Activated CD4-positive, alpha-beta T cell treated with anti-CD3 and anti-CD28 coated beads, Interleukin-2, amount 10 ng/mL, durations not matched to agents 24 days and 14 days (primary cell): ENCODE measurements at regions of chr2 and their contacts with region 1.

Region 1: GRCh38 chr2:160493227-160494028 is at the start of gene RBMS1:
- DNase-seq: peak; percentile 87
- H3K4me3 Mint-ChIP-seq: peak within 1 kb of the TSS; percentile 94
- H3K27ac Mint-ChIP-seq: peak within 1 kb of the TSS; percentile 90
- H3K4me1 Mint-ChIP-seq: peaks cover 30% of the 10 kb centered on the region
- H3K27me3 Mint-ChIP-seq: peaks cover 11% of the 10 kb centered on the region
- total RNA-seq, gene RBMS1: 34.0 and 35.2 TPM in 2 replicates

Region 2: GRCh38 chr2:160087854-160088745 is 405.3 kb before region 1 on chr2:
- intact Hi-C with region 1: no loop called
- DNase-seq: no peak
- H3K4me3 Mint-ChIP-seq: no peak overlapping the region
- H3K27ac Mint-ChIP-seq: no peak overlapping the region
- H3K4me1 Mint-ChIP-seq: no peaks in the 10 kb centered on the region
- H3K27me3 Mint-ChIP-seq: no peaks in the 10 kb centered on the region

Region 3: DNA sequence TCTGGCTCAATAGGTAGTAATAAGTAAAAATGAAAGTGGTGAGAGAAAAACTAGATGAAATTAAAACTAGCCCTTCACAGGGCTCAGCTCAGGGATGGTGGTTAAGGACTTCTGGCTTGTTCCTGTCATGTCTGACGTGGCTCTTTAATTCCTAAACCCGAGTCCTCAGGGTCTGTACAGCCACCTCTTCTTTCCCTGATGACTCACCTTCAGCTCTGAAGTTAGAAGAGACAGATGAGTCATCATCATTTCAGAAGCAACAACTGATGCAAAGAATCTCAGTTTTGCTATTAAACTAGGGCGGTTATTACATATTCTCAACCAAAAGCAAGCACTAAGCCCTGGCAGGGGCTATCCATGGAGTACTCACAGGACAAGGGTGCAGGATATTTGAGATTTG is 269.4 kb before region 1 on chr2:
- intact Hi-C with region 1: loop called (anchors 5 kb)
- DNase-seq: peak; percentile 73
- H3K4me3 Mint-ChIP-seq: peak overlapping the region; percentile 31
- H3K27ac Mint-ChIP-seq: peak overlapping the region; percentile 67
- H3K4me1 Mint-ChIP-seq: peaks cover 44% of the 10 kb centered on the region
- H3K27me3 Mint-ChIP-seq: peaks cover 4% of the 10 kb centered on the region

Region 4: DNA sequence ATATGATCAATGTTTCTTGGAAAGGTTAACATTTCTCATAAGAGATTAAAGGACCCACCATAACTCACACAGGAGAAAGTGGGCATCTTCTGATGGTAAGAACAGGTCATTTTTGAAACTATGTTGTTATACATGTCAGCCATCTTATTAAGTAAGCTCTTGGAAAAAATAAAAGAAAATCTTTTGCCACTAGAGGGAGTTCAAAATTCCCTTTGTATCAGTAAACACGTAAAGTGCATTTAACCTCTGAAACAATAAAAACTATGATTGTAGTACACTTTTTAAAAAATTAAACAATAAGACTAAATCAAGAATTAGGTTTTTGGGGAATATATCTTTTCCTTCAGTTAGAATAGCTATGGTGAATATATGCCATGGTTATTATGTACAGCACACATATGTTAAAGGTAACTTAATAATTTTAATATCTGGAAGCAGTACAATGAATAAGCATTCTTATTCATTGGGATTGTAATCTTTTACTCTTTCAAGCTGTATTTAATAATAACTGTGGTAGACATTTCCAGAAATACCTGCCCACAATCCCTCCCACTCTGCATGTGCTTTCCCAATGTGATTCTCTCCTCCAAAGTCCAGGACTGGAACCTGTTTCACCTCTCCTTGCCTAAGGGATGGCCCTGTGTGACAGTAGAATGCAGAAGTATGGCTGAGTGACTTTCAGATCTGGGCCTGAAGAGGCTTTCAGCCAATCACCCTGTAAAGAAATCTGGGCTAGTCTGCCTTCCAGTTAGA is 64.0 kb before region 1 on chr2:
- intact Hi-C with region 1: loop called (anchors 1 kb)
- DNase-seq: no peak
- H3K4me3 Mint-ChIP-seq: no peak overlapping the region
- H3K27ac Mint-ChIP-seq: no peak overlapping the region
- H3K4me1 Mint-ChIP-seq: peaks cover 49% of the 10 kb centered on the region
- H3K27me3 Mint-ChIP-seq: no peaks in the 10 kb centered on the region

Region 5: GRCh38 chr2:160482673-160483072 is 10.8 kb before region 1 on chr2:
- intact Hi-C with region 1: loop called (anchors 1 kb)
- DNase-seq: peak; percentile 83
- H3K4me3 Mint-ChIP-seq: peak overlapping the region; percentile 61
- H3K27ac Mint-ChIP-seq: peak overlapping the region; percentile 81
- H3K4me1 Mint-ChIP-seq: peaks cover 57% of the 10 kb centered on the region
- H3K27me3 Mint-ChIP-seq: no peaks in the 10 kb centered on the region

Region 6: DNA sequence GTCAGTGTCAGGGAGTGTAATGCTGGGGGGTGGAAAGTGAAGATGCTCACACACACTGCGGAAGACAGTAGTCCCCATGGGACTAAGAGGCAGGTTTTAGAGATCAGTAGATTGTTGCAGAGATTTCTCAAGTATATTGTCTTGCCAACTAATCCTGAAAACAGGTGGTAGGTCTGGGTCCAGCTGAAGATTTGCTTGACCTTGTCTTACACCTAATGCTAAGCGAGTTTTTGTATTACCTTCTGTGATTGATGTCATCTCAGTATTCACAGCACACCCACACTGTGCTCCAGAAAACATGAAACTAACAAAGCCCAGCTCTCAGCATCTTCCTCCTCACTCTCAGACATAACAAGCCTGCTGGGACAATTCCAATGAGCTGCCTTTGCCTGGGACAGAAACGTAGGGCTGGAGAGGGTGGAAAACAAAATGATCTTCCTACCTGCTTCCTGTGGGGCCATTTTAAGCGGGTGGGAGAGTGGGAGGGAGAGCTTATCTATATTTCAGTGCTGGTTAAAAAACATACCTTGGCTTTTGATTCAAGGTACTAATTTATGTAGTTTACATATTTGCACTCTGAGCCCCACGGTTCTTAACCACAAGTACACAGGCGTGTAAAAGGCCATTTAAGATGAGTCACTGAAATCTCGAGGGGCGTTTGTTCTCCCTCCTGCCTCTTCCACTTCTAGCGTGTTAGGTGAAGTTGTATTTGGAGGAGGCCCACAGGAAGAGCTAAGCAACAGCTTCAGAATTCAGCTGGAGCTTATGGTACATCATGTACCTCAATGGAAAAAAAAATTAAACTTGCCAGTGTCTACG is 23.3 kb after region 1 on chr2:
- intact Hi-C with region 1: loop called (anchors 1 kb)
- DNase-seq: peak; percentile 59
- H3K4me3 Mint-ChIP-seq: peak overlapping the region; percentile 42
- H3K27ac Mint-ChIP-seq: peak overlapping the region; percentile 84
- H3K4me1 Mint-ChIP-seq: peaks cover 29% of the 10 kb centered on the region
- H3K27me3 Mint-ChIP-seq: no peaks in the 10 kb centered on the region

Region 7: DNA sequence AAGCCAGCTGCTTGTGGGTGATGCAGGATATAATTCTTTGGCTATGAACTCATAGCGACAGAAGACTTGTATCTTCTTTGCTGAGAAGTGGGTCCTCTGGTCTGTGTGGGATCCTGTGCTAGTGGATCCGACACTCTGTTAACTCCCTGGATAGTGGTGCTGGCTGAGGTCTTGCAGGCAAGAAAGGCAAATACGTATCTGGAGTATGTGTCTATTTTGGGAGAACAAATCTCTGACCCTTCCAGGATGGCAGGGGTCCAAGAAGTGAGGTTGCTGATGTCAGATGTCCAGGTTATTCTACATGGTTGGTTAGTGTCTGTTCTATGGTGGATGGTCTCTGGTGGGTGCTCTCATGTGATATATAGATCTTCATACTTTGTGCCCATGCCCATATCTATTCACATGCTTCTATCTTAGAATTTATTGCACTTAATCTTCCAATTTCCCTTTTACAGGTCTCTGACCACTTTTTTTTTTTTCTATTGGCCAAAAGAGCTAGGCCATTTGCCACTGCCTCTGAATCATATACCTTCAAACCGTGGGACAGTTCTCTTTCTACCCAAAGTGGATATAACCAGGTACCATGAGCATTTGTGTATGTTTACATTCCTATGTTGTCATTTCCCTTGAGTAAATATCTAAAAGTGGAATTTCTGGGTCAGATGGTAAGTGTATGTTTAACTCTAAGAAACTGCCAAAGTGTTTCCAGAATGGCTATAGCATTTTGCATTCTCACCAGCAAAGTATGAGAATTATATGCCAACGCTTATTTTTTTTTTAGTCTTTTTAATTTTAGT is 45.3 kb after region 1 on chr2:
- intact Hi-C with region 1: no loop called
- DNase-seq: no peak
- H3K4me3 Mint-ChIP-seq: no peak overlapping the region
- H3K27ac Mint-ChIP-seq: no peak overlapping the region
- H3K4me1 Mint-ChIP-seq: no peaks in the 10 kb centered on the region
- H3K27me3 Mint-ChIP-seq: no peaks in the 10 kb centered on the region

Region 8: GRCh38 chr2:161136696-161137324 is 643.4 kb after region 1 on chr2:
- intact Hi-C with region 1: loop called (anchors 10 kb)
- DNase-seq: peak; percentile 88
- H3K4me3 Mint-ChIP-seq: peak overlapping the region; percentile 89
- H3K27ac Mint-ChIP-seq: peak overlapping the region; percentile 96
- H3K4me1 Mint-ChIP-seq: peaks cover 39% of the 10 kb centered on the region
- H3K27me3 Mint-ChIP-seq: no peaks in the 10 kb centered on the region